ENCODE measurements at regions of chr7 and their contacts with region 1.

Region 1: DNA sequence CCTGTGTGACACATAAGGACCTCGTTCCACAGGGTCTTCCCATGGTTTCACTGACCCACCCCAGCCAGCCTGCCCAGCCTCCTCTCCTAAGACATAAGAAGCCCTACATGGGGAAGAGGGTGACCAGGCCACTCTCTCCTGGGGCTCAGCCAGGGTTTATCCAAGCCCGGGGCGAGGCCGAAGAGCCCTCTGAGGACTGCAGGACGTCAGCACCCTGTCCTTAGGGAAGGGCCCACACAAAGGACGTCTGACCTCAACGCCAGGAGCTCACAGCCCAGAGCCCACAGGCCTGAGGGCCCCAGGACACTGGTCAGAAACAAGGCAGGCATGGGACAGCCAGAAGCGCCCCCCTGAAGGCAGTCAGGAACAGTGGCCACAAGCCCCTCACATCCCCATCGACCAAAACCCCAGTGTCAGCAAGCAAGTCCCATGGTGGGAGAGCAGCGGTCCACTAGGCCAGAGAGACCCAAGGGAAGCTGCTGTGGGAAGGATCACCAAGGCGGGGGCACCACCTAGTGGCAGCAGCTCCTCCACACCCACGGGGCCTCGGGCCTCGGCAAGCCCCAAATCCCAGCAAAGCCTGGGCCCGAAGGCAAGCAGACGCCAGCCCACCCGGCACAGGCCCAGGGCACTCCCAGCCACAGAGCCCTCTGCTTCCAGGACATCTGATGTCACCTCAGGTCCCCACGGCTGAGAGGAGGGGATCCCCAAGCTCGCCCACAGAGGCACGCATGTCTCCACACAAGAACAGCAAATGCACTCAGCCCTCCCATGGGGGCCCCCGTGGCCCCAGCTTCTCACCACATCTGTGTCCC is 23.4 kb downstream of the MAD1L1 start:
- DNase-seq: peak; percentile 86
- CTCF ChIP-seq: peak; percentile 93

Region 2: DNA sequence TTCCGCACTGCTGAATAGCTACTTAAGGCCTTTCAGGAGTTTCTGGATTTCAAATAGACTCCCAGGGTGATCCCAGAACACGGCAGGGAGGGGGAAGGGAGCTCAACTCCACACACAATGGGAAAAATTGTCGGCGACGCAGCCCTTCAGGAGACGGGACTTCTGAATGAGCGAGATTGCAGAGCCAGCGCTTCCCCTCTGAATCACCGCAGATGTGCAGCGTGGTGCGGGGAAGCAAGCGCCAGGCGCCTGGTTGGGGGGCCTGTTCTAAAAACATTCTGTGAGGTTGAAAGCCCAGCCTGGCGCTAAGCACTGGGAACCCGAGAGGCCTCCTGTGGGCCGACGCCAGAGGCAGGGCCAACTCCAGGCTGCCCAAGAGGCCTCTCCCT is 139.9 kb before region 1 on chr7:
- CTCF ChIA-PET with region 1: interaction called, 10 read pairs
- POLR2A ChIA-PET with region 1: no interaction called
- DNase-seq: no peak
- CTCF ChIP-seq: no peak

Region 3: GRCh38 chr7:2195400-2196246 is 13.7 kb before region 1 on chr7:
- CTCF ChIA-PET with region 1: interaction called, 10 read pairs
- POLR2A ChIA-PET with region 1: no interaction called
- DNase-seq: no peak
- CTCF ChIP-seq: no peak

Measured in GM10248 (cell line).